Posterior cingulate gyrus (tissue), 11 donors: ENCODE measurements at regions of chr2 and their contacts with region 1.

Region 1: DNA sequence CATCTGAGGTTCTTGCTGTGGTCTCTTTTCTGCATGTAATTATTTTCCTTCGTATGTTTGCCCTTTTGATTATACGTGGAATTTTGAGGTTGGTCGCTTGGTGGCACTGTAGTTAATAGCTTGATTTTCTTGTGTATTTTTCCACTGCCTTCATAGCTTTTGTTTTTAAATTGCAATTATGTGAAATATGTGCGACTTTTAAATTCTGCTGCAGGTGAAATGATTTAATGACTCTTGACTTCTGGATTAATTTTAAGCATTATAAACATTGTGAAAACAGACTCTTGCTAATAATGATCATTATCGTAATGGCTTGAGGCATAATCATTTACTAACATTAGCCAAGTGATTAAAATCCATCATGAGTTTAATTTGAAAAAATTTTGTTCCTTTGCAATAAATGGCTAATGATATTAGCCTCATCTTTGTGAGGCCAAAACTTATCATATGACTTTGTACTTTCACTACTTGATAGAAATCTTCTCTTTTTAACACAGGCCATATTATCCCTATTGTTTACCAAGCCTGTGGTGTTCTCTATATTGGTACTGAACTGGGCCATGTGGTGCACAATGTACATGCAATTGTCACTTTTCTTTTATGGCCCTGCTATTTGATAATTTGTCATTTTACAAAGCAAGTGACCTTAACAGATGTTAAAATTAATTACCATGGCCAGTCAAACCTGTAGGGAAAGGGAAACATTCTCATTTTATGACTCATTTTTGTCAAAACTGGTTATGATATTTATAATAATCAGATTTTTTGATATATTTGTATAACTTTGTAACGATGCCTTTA is 62.8 kb upstream of the NEUROD1 start:
- DNase-seq: peak in 3 of 10 donors; percentile 17 to 37 (median 25)

Region 2: GRCh38 chr2:181411105-181411849 is 331.8 kb before region 1 on chr2:
- intact Hi-C with region 1: no loop called
- DNase-seq: peak in 2 of 10 donors; percentile 45 to 70

Region 3: GRCh38 chr2:181499231-181499630 is 243.9 kb before region 1 on chr2:
- intact Hi-C with region 1: no loop called
- DNase-seq: no peak

Region 4: GRCh38 chr2:181814064-181814491 is 71.0 kb after region 1 on chr2:
- intact Hi-C with region 1: no loop called
- DNase-seq: no peak

Region 5: DNA sequence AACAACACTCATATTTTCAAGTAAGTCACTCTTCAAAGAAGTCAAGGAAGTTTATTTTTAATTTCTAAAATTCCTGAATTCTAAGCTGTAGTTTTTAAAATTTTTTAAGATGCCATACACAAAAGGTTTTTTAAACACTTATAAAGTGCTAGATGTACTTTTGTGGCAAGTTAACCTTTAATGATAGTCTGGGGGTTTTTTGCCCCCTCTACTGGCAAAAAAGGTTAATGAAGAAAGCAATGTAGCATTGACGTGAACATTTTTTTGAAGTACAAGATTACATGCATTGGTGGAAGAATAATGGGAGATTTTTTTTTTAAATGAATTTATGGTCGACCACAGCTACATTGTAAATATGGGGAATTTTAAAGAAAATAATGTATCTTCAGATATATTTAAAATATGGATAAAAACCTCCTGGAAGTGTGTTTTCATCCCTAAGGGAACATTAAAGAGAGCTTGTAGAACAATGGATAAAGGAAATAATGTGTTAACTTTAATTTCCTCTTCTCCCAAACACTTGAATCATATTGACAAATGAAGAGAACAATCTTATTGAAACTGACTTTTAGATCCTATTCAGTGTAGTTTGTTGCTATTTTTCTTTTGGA is 161.0 kb after region 1 on chr2:
- intact Hi-C with region 1: loop called (anchors 1 kb)
- DNase-seq: no peak

Region 6: DNA sequence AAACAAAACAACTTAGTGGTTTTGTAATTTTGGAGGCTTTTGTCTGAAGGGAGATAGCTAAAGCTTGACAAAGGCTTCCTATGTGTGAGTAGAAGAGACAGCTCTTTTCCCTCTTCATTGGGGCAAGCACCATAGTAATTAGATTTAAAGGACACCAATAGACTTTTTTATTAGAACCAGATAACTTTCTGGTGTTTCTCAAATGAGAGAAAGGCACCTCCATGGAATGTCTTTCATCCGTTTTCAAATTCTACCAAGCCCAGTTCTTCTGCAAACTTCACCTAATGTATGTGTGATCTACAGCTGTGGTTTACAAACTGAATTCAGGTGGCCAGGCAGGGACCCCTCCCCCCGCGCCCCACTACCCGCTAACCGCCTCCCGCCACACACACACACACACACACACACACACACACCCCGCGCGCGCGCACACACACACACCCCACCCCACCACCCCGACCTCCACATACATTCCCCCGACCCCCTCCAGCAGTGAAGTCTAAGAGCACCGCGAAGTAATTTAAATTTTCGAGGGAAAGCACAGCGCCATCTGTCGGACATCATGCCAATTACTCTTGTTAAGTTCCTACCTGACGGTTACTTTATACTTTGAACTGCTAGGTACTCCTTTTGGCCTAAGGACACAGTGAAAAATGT is 210.9 kb after region 1 on chr2:
- intact Hi-C with region 1: loop called (anchors 2 kb)
- DNase-seq: peak in 5 of 10 donors; percentile 38 to 80 (median 52)

Region 7: DNA sequence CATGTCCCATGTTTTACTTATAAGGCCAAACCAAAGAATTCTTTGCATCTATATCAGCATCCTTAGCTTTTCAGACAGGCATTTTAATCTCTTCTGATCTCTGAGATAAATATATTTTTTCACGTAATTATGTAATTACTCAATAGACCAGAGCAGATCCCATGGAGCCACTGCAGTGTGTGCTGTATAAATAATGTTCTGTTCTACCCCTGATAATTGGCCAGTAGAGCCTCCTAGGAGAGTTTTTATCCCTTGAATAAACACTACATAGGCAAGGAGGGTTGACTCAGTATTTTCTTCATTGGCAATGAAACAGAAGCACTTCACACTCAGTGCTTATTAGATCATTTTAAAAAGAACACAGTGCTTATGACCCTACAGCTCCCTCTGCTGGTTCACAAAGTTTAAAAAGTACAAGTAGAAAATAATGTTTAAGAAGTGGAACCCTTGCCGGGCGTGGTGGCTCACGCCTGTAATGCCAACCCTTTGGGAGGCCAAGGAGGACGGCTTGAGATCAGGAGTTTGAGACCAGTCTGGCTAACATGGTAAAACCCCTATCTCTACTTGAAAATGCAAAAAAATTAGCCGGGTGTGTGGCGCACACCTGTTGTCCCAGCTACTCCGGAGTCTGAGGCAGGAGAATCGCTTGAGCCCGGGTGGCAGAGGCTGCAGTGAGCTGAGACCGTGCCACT is 334.5 kb after region 1 on chr2:
- intact Hi-C with region 1: loop called (anchors 1 kb)
- DNase-seq: peak in 2 of 10 donors; percentile 12 to 75